Prostate gland (tissue), 2 donors: ENCODE measurements at regions of chr4 and their contacts with region 1.

Region 1: DNA sequence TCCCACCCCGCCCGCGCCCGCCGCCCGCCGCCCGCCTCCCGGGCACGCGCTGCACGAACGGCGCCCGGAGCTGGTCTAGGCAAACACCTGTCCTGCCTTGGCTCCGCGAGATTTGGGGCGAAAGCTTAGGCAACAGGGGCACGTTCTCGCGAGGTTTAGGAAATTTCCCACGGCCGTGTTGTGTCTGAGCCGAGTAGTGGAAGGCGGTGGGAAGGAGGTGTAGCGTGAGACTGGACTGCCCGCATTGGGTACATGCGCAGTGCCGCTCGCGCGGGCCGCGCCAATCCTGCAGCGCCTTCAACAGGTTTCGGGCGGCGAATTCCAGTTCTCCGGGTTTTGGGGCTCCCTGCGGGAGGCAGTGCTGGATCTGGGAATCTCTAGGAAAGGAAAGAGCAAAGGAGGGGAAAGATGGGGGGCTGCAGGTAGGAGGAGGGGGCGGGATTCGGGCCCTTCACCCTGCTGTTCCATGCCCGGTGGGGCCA is 1.3 kb upstream of the RBPJ start:
- DNase-seq: peak; percentile 99
- H3K4me3 ChIP-seq: peak overlapping the region; percentile 67 to 80
- H3K27ac ChIP-seq: peak overlapping the region; percentile 95 to 96
- H3K4me1 ChIP-seq: no peaks in the 10 kb centered on the region
- H3K27me3 ChIP-seq: no peaks in the 10 kb centered on the region
- CTCF ChIP-seq: peak in 2 of 4 experiments; percentile 25 to 37
- POLR2A ChIP-seq: peak; percentile 53

Region 2: DNA sequence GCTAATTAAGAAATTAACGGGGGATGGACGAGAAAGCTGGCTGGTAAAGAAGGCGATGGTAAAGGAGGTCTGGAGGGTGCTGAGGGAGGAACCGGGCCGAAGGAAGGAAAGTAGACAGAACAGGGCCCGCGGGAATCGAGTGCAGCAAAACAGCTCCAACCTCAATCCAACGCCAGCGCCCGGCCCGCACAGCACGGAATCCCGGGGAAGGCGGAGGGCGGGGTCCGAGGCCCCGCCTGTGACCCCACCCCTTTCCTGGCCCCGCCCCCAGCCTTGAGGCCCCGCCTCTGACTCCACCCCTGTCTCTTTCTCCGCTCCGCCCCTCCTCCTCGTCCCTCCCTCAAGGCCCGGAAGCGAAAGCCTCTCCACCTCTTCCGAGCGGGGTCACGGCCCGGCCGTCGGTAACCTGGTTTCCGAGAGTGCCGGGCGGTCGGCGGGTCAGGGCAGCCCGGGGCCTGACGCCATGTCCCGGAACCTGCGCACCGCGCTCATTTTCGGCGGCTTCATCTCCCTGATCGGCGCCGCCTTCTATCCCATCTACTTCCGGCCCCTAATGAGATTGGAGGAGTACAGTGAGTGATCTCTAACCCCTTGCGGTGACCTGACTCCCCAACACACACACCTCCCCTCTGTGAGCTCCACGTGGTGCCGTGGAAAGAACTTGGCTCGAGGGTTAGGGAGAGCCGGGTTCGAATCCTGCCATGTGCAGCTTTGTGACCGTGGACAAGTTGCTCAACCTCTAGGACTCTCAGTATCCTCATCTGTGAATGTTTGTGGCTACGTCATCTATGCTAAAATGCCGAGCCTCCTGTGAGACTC is 405.4 kb before region 1 on chr4 and contains the start of gene SMIM20:
- intact Hi-C with region 1: loop called (anchors 10 kb)
- DNase-seq: peak; percentile 91
- H3K4me3 ChIP-seq: peak within 1 kb of the TSS; percentile 76 to 85
- H3K27ac ChIP-seq: peak within 1 kb of the TSS; percentile 79 to 82
- H3K4me1 ChIP-seq: no peaks in the 10 kb centered on the region
- H3K27me3 ChIP-seq: no peaks in the 10 kb centered on the region
- CTCF ChIP-seq: peak in 1 of 4 experiments; percentile 8
- POLR2A ChIP-seq: peak; percentile 54
- total RNA-seq, gene SMIM20: 34.7 to 35.7 TPM

Region 3: DNA sequence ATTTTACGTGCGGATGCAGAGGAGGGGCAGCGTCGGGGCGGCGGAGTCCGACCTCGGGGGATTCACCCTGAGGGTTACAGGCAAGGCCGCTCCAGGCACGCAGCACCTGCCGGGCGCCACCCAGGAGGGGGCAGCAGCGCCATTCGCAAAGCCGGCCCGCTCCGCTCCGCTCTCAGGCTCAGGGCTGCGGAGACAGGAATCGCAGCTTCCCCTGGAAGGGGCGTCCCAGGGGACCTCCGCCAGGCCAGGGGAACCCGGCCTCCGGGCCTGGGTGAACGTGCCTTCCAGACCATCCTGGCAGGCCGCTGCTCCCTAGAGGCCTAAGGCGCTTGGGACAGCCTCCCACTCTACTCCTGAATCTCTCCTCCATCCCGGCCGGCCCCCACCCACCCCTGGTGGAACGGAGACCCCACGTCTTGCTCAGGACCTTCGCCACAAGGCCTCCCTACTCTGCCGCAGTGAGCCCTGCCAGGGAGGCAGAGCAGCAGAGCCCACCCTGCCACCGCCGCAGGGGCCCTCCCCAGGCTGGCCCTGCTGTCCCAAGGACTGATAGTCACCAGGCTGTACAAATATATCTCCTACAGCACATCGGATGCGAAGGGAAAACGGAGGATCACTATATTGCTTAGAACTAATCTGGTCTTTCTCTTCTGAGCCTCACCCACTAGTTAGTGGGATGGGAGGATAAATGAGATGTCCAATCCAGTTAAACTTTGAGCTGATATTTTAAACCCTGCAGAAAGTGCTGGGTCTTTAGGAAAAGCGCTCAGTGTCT is 290.5 kb before region 1 on chr4:
- intact Hi-C with region 1: loop called (anchors 5 kb)
- DNase-seq: peak; percentile 46
- H3K4me3 ChIP-seq: no peak overlapping the region
- H3K27ac ChIP-seq: no peak overlapping the region
- H3K4me1 ChIP-seq: no peaks in the 10 kb centered on the region
- H3K27me3 ChIP-seq: no peaks in the 10 kb centered on the region
- CTCF ChIP-seq: peak; percentile 20 to 83 (median 66)
- POLR2A ChIP-seq: no peak

Region 4: GRCh38 chr4:26081795-26082498 is 237.6 kb before region 1 on chr4:
- intact Hi-C with region 1: loop called (anchors 5 kb)
- DNase-seq: peak; percentile 58
- H3K4me3 ChIP-seq: no peak overlapping the region
- H3K27ac ChIP-seq: peak overlapping the region in 1 of 2 donors; percentile 50
- H3K4me1 ChIP-seq: peaks cover 17% of the 10 kb centered on the region
- H3K27me3 ChIP-seq: no peaks in the 10 kb centered on the region
- CTCF ChIP-seq: peak; percentile 42 to 80 (median 71)
- POLR2A ChIP-seq: no peak

Region 5: DNA sequence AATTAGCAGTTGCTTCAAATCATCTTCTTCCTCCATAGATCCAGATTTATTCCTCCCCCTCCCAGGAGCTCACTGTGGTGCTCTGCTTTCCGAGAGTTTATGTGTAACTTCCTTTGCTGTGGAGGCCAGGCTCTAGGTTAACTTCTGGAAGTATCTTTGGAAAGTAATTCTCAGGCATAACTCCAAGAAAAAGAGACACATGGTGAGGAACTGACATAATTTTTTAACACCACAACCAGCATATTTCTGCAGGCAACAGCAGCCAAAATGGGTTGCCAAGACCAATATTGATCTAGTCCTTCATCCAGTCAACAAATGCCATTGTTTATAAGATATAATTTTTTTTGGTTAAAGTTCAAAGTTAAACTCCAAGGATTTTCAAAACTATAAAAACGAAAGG is 113.2 kb before region 1 on chr4:
- intact Hi-C with region 1: loop called (anchors 2 kb)
- DNase-seq: peak; percentile 38
- H3K4me3 ChIP-seq: no peak overlapping the region
- H3K27ac ChIP-seq: no peak overlapping the region
- H3K4me1 ChIP-seq: no peaks in the 10 kb centered on the region
- H3K27me3 ChIP-seq: no peaks in the 10 kb centered on the region
- CTCF ChIP-seq: no peak
- POLR2A ChIP-seq: no peak

Region 6: DNA sequence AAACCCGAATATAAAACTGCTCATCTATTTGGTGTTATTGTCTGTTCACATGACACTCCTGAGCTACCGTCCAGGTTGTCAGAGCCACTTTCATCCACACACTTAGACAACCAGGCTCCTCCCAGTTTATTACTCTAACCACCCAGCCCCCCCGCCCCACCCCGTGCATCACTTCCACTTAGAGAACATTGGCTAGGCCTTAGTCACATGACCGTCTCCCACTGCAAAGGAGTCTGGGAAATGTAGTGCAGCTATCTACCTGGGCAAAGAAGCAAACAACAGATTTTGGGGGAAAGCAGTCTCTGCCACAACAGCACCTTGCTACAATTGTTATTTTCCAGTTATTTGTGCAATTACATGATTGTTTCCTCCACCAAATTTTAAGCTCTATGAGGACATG is 56.3 kb before region 1 on chr4:
- intact Hi-C with region 1: loop called (anchors 10 kb)
- DNase-seq: no peak
- H3K4me3 ChIP-seq: no peak overlapping the region
- H3K27ac ChIP-seq: no peak overlapping the region
- H3K4me1 ChIP-seq: no peaks in the 10 kb centered on the region
- H3K27me3 ChIP-seq: no peaks in the 10 kb centered on the region
- CTCF ChIP-seq: no peak
- POLR2A ChIP-seq: no peak

Region 7: GRCh38 chr4:26510334-26510964 is 190.9 kb after region 1 on chr4:
- intact Hi-C with region 1: no loop called
- DNase-seq: no peak
- H3K4me3 ChIP-seq: no peak overlapping the region
- H3K27ac ChIP-seq: no peak overlapping the region
- H3K4me1 ChIP-seq: no peaks in the 10 kb centered on the region
- H3K27me3 ChIP-seq: no peaks in the 10 kb centered on the region
- CTCF ChIP-seq: no peak
- POLR2A ChIP-seq: no peak